Heart right ventricle (tissue), 16 donors: ENCODE measurements at regions of chr15 and their contacts with region 1.

Region 1: DNA sequence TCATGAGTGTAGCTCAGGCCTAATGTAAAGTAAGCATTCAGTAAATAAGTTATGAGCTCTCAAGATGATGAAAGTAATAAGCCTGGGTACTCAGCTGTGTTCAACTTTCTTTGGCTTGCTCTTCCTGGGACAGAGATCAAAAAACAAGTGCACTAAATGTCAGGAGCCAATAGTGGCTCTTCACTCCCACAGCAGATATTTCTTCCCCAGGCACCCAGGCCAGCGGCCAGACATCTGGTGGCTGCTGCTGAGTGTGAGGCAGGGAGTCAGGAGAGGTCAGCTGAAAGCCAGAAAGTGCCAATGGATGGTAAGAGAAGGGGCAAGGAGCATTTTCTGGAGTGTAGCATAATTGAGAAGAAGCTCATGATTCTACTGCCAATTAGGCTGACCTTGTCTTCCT is 18.2 kb upstream of the ITGA11 start:
- DNase-seq: peak in 1 of 2 donors; percentile 44
- ATAC-seq: peak in 7 of 8 donors; percentile 50 to 92 (median 89)
- H3K4me3 ChIP-seq: no peak overlapping the region
- H3K27ac ChIP-seq: peak overlapping the region in 1 of 10 donors; percentile 16
- H3K4me1 ChIP-seq: peaks cover 0 to 16% (median 0%) of the 10 kb centered on the region in 9 donors
- H3K27me3 ChIP-seq: peaks cover 0 to 25% (median 6%) of the 10 kb centered on the region in 7 donors
- CTCF ChIP-seq: no peak

Region 2: DNA sequence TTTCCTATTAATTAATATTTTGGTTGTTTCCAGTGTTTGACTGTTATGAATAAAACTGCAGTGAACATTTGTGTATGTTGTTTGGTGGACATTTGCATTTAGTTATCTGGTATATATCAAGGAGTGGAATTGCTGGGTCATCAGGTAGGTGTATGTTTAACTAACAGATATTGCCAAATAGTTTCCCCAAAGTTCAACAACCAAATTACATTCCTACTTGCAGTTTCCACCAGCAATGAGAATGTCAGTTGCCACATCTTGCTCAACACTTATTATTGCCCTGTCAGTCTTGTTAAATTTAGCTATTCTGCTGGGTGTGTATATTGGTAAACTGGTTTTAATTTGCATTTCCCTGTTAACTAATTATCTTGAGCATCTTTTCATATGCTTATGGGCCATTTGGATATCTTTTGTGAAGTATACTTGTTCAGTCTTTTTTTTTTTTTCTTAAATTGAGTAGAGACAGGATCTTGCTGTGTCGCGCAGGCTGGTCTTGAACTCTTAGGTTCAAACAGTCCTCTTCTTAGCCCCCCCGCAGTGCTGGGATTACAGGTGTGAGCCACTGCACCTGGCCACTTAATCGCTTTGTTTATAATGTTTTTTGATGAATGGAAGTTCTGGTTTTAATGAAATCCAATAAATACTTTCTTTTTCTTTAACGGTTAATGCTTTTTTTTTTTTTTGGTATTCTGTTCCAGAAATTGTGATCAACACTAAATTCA is 164.8 kb before region 1 on chr15:
- intact Hi-C with region 1: no loop called
- DNase-seq: no peak
- ATAC-seq: peak in 1 of 8 donors; percentile 25
- H3K4me3 ChIP-seq: no peak overlapping the region
- H3K27ac ChIP-seq: peak overlapping the region in 1 of 10 donors; percentile 36
- H3K4me1 ChIP-seq: peaks cover 2 to 100% (median 80%) of the 10 kb centered on the region in 9 donors
- H3K27me3 ChIP-seq: no peaks in the 10 kb centered on the region
- CTCF ChIP-seq: no peak

Region 3: DNA sequence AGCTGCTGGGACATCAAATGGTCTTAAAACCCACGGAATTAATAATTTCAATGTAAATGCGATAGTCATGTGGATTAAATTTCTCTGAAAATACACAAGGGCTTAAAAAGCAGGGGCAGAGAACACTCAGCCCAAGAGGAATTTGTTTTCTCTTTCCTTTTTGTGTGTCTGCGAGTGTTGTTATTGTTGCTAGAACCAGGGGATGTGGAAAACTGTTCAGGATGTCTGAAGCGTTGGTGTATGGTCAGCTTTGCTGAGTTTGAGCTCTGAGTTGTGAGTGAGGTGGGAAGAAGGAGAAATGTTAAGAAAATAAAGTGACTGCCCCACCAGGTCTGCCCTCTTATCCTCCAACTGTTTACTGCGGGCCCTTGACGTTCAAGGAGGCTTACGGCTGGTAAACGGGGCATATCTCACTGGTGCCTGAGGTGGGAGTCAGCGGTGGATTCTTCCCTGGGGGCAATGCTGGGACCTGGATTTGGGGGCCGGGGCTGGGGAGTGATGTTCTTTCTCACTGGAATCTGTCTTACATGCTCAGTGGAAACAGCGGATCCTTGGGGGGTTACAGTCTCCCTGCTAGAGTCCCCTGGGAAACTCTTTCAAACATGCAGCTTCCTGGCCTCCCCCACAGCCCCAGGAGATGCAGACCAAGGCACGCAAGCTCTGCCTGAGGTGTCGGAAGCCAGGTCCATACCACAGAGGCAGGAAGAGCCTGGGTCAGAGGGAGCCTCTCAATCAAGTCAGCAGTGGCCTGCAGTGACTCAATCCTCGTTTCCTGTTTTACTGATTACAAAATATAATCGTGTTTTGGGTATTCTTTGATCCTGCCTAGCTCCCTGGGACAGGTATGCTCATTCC is 60.0 kb before region 1 on chr15:
- intact Hi-C with region 1: loop called in 1 of 10 experiments (anchors 10 kb)
- DNase-seq: no peak
- ATAC-seq: peak in 3 of 8 donors; percentile 27 to 80 (median 71)
- H3K4me3 ChIP-seq: no peak overlapping the region
- H3K27ac ChIP-seq: no peak overlapping the region
- H3K4me1 ChIP-seq: peaks cover 0 to 11% (median 0%) of the 10 kb centered on the region in 9 donors
- H3K27me3 ChIP-seq: peaks cover 0 to 5% (median 0%) of the 10 kb centered on the region in 7 donors
- CTCF ChIP-seq: no peak

Region 4: DNA sequence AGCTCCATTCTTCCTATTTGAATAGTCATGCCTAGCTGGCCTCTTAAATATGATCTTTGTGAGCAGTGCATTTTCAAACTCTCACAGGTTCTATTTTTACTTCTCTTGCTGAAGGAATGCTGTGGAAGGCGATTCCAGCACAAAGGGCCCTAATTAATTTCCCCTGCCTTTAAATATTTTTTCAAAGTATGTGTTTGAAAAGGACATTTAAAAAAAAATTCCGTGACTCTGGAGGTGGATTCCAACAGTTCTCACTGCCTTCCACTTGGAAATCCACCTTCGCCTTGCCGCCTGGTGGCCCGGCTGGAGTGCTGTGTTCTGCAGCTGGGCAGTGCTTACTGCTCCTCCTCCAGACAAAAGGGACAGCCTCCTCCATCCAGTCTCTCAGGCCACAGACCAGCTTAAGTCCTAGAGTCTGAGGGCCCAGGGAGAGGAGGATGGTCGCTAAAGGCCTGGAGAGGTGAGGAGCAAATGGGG is 67.1 kb after region 1 on chr15:
- intact Hi-C with region 1: loop called in 1 of 10 experiments (anchors 10 kb)
- DNase-seq: peak in 1 of 2 donors; percentile 52
- ATAC-seq: peak; percentile 74 to 85 (median 81)
- H3K4me3 ChIP-seq: no peak overlapping the region
- H3K27ac ChIP-seq: peak overlapping the region in 9 of 10 donors; percentile 30 to 67 (median 52)
- H3K4me1 ChIP-seq: peaks cover 0 to 28% (median 17%) of the 10 kb centered on the region in 9 donors
- H3K27me3 ChIP-seq: no peaks in the 10 kb centered on the region
- CTCF ChIP-seq: peak in 7 of 9 donors; percentile 21 to 48 (median 43)

Region 5: GRCh38 chr15:68536331-68537095 is 86.3 kb after region 1 on chr15:
- intact Hi-C with region 1: no loop called
- DNase-seq: no peak
- ATAC-seq: peak in 1 of 8 donors; percentile 87
- H3K4me3 ChIP-seq: no peak overlapping the region
- H3K27ac ChIP-seq: peak overlapping the region in 2 of 10 donors; percentile 22 to 43
- H3K4me1 ChIP-seq: no peaks in the 10 kb centered on the region
- H3K27me3 ChIP-seq: no peaks in the 10 kb centered on the region
- CTCF ChIP-seq: no peak

Region 6: GRCh38 chr15:68637767-68638404 is 187.7 kb after region 1 on chr15:
- intact Hi-C with region 1: no loop called
- DNase-seq: peak; percentile 56 to 80
- ATAC-seq: peak; percentile 58 to 85 (median 76)
- H3K4me3 ChIP-seq: no peak overlapping the region
- H3K27ac ChIP-seq: peak overlapping the region in 7 of 10 donors; percentile 5 to 66 (median 56)
- H3K4me1 ChIP-seq: peaks cover 19 to 88% (median 67%) of the 10 kb centered on the region in 9 donors
- H3K27me3 ChIP-seq: no peaks in the 10 kb centered on the region
- CTCF ChIP-seq: no peak